CD8-positive, alpha-beta T cell (primary cell): ENCODE measurements at regions of chr15 and their contacts with region 1.

Region 1: GRCh38 chr15:45457641-45458433 is 64.7 kb downstream of the SLC30A4 start:
- DNase-seq: peak; percentile 43 to 90 (median 79)
- ATAC-seq: peak; percentile 65
- H3K4me3 ChIP-seq: peak overlapping the region; percentile 53 to 57
- H3K4me3 Mint-ChIP-seq: peak overlapping the region; percentile 84
- H3K27ac ChIP-seq: peak overlapping the region; percentile 24 to 61
- H3K27ac Mint-ChIP-seq: peak overlapping the region; percentile 87
- H3K4me1 ChIP-seq: peaks cover 24% of the 10 kb centered on the region
- H3K4me1 Mint-ChIP-seq: peaks cover 42% of the 10 kb centered on the region
- H3K27me3 ChIP-seq: no peaks in the 10 kb centered on the region
- H3K27me3 Mint-ChIP-seq: no peaks in the 10 kb centered on the region
- CTCF ChIP-seq: peak; percentile 93

Region 2: DNA sequence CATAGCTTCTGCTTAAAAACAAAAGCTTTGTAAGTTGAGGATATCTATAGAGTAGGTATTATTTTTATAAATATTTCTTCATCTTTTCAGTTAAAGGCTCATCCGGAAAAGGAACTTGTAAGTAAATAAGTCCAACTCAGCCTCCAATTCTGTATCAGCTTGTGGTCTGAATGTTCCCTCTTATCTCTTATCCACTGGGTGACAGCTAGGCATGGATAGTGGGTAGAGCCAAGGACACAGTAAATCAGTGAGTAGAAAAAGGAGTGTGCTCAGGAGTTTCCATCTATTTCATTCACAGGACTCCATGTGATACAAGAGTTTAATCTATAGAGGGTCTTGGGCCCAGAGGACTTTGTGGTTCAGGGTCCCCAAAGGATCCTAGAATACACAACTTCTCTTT is 1313.7 kb before region 1 on chr15:
- CTCF ChIA-PET with region 1: no interaction called
- POLR2A ChIA-PET with region 1: no interaction called
- intact Hi-C with region 1: no loop called
- DNase-seq: no peak
- ATAC-seq: no peak
- H3K4me3 ChIP-seq: no peak overlapping the region
- H3K4me3 Mint-ChIP-seq: no peak overlapping the region
- H3K27ac ChIP-seq: no peak overlapping the region
- H3K27ac Mint-ChIP-seq: no peak overlapping the region
- H3K4me1 ChIP-seq: no peaks in the 10 kb centered on the region
- H3K4me1 Mint-ChIP-seq: no peaks in the 10 kb centered on the region
- H3K27me3 ChIP-seq: no peaks in the 10 kb centered on the region
- H3K27me3 Mint-ChIP-seq: peaks cover 11% of the 10 kb centered on the region
- CTCF ChIP-seq: no peak

Region 3: GRCh38 chr15:45166834-45167630 is 290.8 kb before region 1 on chr15:
- CTCF ChIA-PET with region 1: interaction called, 8 read pairs
- POLR2A ChIA-PET with region 1: no interaction called
- intact Hi-C with region 1: loop called in 1 of 2 experiments (anchors 1 kb)
- DNase-seq: peak; percentile 64 to 90 (median 84)
- ATAC-seq: peak; percentile 90
- H3K4me3 ChIP-seq: peak overlapping the region; percentile 73 to 81
- H3K4me3 Mint-ChIP-seq: peak overlapping the region; percentile 81
- H3K27ac ChIP-seq: peak overlapping the region; percentile 86 to 87
- H3K27ac Mint-ChIP-seq: peak overlapping the region; percentile 87
- H3K4me1 ChIP-seq: peaks cover 17% of the 10 kb centered on the region
- H3K4me1 Mint-ChIP-seq: peaks cover 19% of the 10 kb centered on the region
- H3K27me3 ChIP-seq: no peaks in the 10 kb centered on the region
- H3K27me3 Mint-ChIP-seq: no peaks in the 10 kb centered on the region
- CTCF ChIP-seq: peak; percentile 47

Region 4: DNA sequence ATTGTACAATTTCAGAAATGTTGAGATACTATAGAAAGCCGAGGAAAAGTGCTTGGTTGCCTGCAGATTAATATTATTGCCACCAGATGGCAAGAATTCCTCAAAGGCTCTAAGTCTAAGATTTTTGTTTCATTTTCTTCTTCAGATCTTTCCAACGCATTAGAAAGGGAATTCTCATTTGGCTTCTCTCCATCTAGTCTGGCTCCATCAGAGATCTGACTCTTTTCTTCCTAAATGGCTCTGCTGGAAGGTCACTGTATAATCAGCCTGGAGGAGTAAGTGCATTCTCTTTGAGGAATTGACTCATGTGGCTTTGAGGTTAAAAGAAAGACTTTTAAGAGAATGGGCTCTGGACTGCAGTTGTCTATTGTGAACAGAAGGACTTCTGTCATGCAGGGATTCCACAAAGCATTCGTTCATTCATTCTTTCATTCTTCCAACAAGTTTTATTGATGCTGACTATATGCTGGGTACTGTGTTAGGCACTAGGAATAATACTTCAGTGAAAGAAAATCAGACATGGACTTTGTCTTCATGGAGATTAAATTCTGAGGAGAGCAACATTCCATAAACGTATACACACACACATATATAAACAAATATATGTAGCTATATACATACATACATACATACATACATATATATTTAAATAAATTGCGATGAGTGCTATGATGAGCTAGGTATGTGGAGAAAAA is 150.5 kb before region 1 on chr15:
- CTCF ChIA-PET with region 1: no interaction called
- POLR2A ChIA-PET with region 1: no interaction called
- intact Hi-C with region 1: loop called in 1 of 2 experiments (anchors 2 kb)
- DNase-seq: peak in 2 of 9 experiments; percentile 30 to 44
- ATAC-seq: no peak
- H3K4me3 ChIP-seq: peak overlapping the region; percentile 15 to 24
- H3K4me3 Mint-ChIP-seq: peak overlapping the region; percentile 57
- H3K27ac ChIP-seq: no peak overlapping the region
- H3K27ac Mint-ChIP-seq: no peak overlapping the region
- H3K4me1 ChIP-seq: no peaks in the 10 kb centered on the region
- H3K4me1 Mint-ChIP-seq: peaks cover 4% of the 10 kb centered on the region
- H3K27me3 ChIP-seq: no peaks in the 10 kb centered on the region
- H3K27me3 Mint-ChIP-seq: peaks cover 29% of the 10 kb centered on the region
- CTCF ChIP-seq: no peak

Region 5: GRCh38 chr15:45429974-45430792 is 27.7 kb before region 1 on chr15:
- CTCF ChIA-PET with region 1: interaction called, 68 read pairs
- POLR2A ChIA-PET with region 1: interaction called, 3 read pairs
- intact Hi-C with region 1: loop called (anchors 1 kb)
- DNase-seq: peak; percentile 72 to 93 (median 87)
- ATAC-seq: peak; percentile 95
- H3K4me3 ChIP-seq: peak overlapping the region; percentile 43 to 45
- H3K4me3 Mint-ChIP-seq: peak overlapping the region; percentile 61
- H3K27ac ChIP-seq: no peak overlapping the region
- H3K27ac Mint-ChIP-seq: no peak overlapping the region
- H3K4me1 ChIP-seq: peaks cover 7% of the 10 kb centered on the region
- H3K4me1 Mint-ChIP-seq: peaks cover 3% of the 10 kb centered on the region
- H3K27me3 ChIP-seq: peaks cover 0 to 2% of the 10 kb centered on the region in 2 experiments
- H3K27me3 Mint-ChIP-seq: no peaks in the 10 kb centered on the region
- CTCF ChIP-seq: peak; percentile 100

Region 6: GRCh38 chr15:45473068-45473467 is 15.2 kb after region 1 on chr15:
- CTCF ChIA-PET with region 1: interaction called, 12 read pairs
- POLR2A ChIA-PET with region 1: no interaction called
- intact Hi-C with region 1: no loop called
- DNase-seq: no peak
- ATAC-seq: no peak
- H3K4me3 ChIP-seq: no peak overlapping the region
- H3K4me3 Mint-ChIP-seq: no peak overlapping the region
- H3K27ac ChIP-seq: no peak overlapping the region
- H3K27ac Mint-ChIP-seq: no peak overlapping the region
- H3K4me1 ChIP-seq: no peaks in the 10 kb centered on the region
- H3K4me1 Mint-ChIP-seq: no peaks in the 10 kb centered on the region
- H3K27me3 ChIP-seq: peaks cover 0 to 9% of the 10 kb centered on the region in 2 experiments
- H3K27me3 Mint-ChIP-seq: peaks cover 18% of the 10 kb centered on the region
- CTCF ChIP-seq: no peak

Region 7: GRCh38 chr15:45587095-45587860 is 129.4 kb after region 1 on chr15 and contains the start of gene BLOC1S6:
- CTCF ChIA-PET with region 1: interaction called, 10 read pairs
- POLR2A ChIA-PET with region 1: interaction called, 6 read pairs
- intact Hi-C with region 1: loop called in 1 of 2 experiments (anchors 1 kb)
- DNase-seq: peak; percentile 83 to 95 (median 90)
- ATAC-seq: peak; percentile 77
- H3K4me3 ChIP-seq: peak within 1 kb of the TSS; percentile 82 to 86
- H3K4me3 Mint-ChIP-seq: peak within 1 kb of the TSS; percentile 100
- H3K27ac ChIP-seq: peak within 1 kb of the TSS; percentile 93 to 98
- H3K27ac Mint-ChIP-seq: peak within 1 kb of the TSS; percentile 100
- H3K4me1 ChIP-seq: peaks cover 32% of the 10 kb centered on the region
- H3K4me1 Mint-ChIP-seq: peaks cover 50% of the 10 kb centered on the region
- H3K27me3 ChIP-seq: no peaks in the 10 kb centered on the region
- H3K27me3 Mint-ChIP-seq: no peaks in the 10 kb centered on the region
- CTCF ChIP-seq: no peak
- total RNA-seq, gene BLOC1S6: 78.1 to 78.9 TPM